AG04450 (cell line): ENCODE measurements at regions of chr16 and their contacts with region 1.

Region 1: GRCh38 chr16:28621481-28622153 is 11.8 kb upstream of the SULT1A1 start:
- DNase-seq: no peak
- H3K4me3 ChIP-seq: no peak overlapping the region
- H3K27ac ChIP-seq: no peak overlapping the region
- H3K27me3 ChIP-seq: peaks cover 18% of the 10 kb centered on the region
- CTCF ChIP-seq: no peak

Region 2: GRCh38 chr16:28592979-28593553 is 28.6 kb before region 1 on chr16:
- CTCF ChIA-PET with region 1: no interaction called
- POLR2A ChIA-PET with region 1: no interaction called
- DNase-seq: no peak
- H3K4me3 ChIP-seq: no peak overlapping the region
- H3K27ac ChIP-seq: no peak overlapping the region
- H3K27me3 ChIP-seq: no peaks in the 10 kb centered on the region
- CTCF ChIP-seq: no peak

Region 3: GRCh38 chr16:28603381-28604185 is 18.0 kb before region 1 on chr16:
- CTCF ChIA-PET with region 1: interaction called, 12 read pairs
- POLR2A ChIA-PET with region 1: no interaction called
- DNase-seq: no peak
- H3K4me3 ChIP-seq: no peak overlapping the region
- H3K27ac ChIP-seq: no peak overlapping the region
- H3K27me3 ChIP-seq: peaks cover 46% of the 10 kb centered on the region
- CTCF ChIP-seq: no peak

Region 4: GRCh38 chr16:29995911-29996772 is 1374.5 kb after region 1 on chr16 and contains the start of gene INO80E:
- CTCF ChIA-PET with region 1: no interaction called
- POLR2A ChIA-PET with region 1: no interaction called
- DNase-seq: peak; percentile 87
- H3K4me3 ChIP-seq: peak within 1 kb of the TSS; percentile 95
- H3K27ac ChIP-seq: peak within 1 kb of the TSS; percentile 80
- H3K27me3 ChIP-seq: no peaks in the 10 kb centered on the region
- CTCF ChIP-seq: no peak
- polyA plus RNA-seq, gene INO80E: 27.3 and 27.5 TPM in 2 replicates